ENCODE measurements at regions of chr6 and their contacts with region 1.

Region 1: DNA sequence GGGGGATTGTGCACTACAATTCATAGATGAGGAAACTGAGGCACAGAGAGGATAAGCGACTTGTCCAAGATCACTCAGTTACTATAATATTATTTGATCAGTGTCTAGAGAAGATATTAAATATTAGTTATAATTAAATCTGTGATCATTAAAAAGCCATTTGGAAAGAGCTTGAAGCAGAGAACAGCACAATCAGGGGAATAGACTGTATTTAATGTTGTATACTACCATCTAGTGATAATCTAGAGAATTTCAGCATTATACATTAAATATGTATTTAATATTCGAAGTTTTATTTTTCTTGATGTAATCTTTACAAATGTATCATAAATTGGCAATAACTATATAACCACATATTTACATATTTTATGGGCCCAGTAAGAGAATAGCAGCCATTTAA is 20.1 kb upstream of the MTCL3 start:
- DNase-seq: no peak
- ATAC-seq: peak; percentile 69
- H3K4me3 ChIP-seq: no peak overlapping the region
- H3K27ac ChIP-seq: no peak overlapping the region
- H3K4me1 ChIP-seq: no peaks in the 10 kb centered on the region
- H3K27me3 ChIP-seq: no peaks in the 10 kb centered on the region
- CTCF ChIP-seq: peak in 2 of 3 experiments; percentile 19 to 49; a peak in 2 of 6 replicates
- EP300 ChIP-seq: no peak
- POLR2A ChIP-seq: no peak
- RAD21 ChIP-seq: peak; percentile 53

Region 2: DNA sequence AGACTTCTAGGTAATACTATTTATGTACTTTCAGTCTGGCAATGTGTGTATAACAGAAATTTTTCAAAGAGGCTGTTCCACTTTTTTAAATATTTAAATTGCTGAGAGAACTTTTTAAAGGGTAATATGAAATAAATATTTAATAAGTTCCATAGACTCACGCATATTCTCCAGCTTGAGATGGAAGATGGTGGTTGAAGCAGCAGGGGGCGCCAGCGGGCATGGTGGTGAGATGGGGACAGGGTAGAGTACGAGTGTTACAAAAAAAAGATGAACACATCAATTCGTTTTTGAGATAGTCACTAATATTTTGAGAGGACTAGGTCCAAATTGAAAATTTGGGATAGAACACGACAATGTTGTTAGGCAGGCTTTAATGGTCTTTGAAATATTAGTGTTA is 352.4 kb before region 1 on chr6:
- CTCF ChIA-PET with region 1: interaction called, 38 read pairs
- POLR2A ChIA-PET with region 1: no interaction called
- RAD21 ChIA-PET with region 1: interaction called, 26 read pairs
- SMC1A ChIA-PET with region 1: interaction called, 9 read pairs
- in situ Hi-C with region 1: no loop called
- intact Hi-C with region 1: loop called (anchors 2 kb)
- DNase-seq: no peak
- ATAC-seq: peak; percentile 84
- H3K4me3 ChIP-seq: no peak overlapping the region
- H3K27ac ChIP-seq: no peak overlapping the region
- H3K4me1 ChIP-seq: no peaks in the 10 kb centered on the region
- H3K27me3 ChIP-seq: no peaks in the 10 kb centered on the region
- CTCF ChIP-seq: peak; percentile 58 to 67 (median 67)
- EP300 ChIP-seq: no peak
- POLR2A ChIP-seq: no peak
- RAD21 ChIP-seq: peak; percentile 50

Region 3: DNA sequence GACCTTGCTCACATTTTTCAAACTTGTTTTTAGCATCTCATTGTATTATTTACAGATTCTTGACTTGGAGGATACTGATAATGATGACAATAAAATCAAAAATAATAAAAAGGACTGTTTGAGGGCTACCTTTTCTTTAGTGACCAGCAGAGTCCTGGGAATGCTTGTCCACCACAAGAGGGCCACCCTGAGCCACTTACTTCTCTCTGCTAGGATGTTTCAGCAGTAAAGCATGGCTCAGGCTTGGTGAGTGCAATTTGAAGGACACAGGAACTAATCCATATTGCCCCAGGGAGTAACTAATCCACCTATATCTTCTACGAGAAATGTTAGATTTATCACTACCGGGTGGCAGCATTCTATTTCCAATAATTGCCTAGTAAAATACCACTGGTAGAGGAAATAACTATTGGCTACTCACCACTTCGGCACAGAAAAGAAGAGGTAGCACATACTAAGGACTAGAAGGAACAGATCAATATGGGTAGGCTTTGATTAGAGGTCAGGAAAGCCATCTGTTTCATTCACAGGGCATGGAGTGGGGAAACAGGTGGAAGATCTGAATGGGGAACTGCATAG is 74.3 kb before region 1 on chr6:
- CTCF ChIA-PET with region 1: interaction called, 83 read pairs
- POLR2A ChIA-PET with region 1: no interaction called
- RAD21 ChIA-PET with region 1: interaction called, 56 read pairs
- SMC1A ChIA-PET with region 1: interaction called, 34 read pairs
- in situ Hi-C with region 1: loop called (anchors 5 kb)
- intact Hi-C with region 1: loop called (anchors 1 kb)
- DNase-seq: no peak
- ATAC-seq: peak; percentile 98
- H3K4me3 ChIP-seq: no peak overlapping the region
- H3K27ac ChIP-seq: no peak overlapping the region
- H3K4me1 ChIP-seq: no peaks in the 10 kb centered on the region
- H3K27me3 ChIP-seq: no peaks in the 10 kb centered on the region
- CTCF ChIP-seq: peak; percentile 81 to 88 (median 83)
- EP300 ChIP-seq: no peak
- POLR2A ChIP-seq: no peak
- RAD21 ChIP-seq: peak; percentile 88

Region 4: GRCh38 chr6:127484212-127484858 is 54.9 kb before region 1 on chr6:
- CTCF ChIA-PET with region 1: interaction called, 11 read pairs
- POLR2A ChIA-PET with region 1: no interaction called
- RAD21 ChIA-PET with region 1: interaction called, 9 read pairs
- SMC1A ChIA-PET with region 1: interaction called, 6 read pairs
- in situ Hi-C with region 1: no loop called
- intact Hi-C with region 1: no loop called
- DNase-seq: peak; percentile 39
- ATAC-seq: peak; percentile 98
- H3K4me3 ChIP-seq: peak overlapping the region; percentile 9; the same call in 1 of the 2 replicates
- H3K27ac ChIP-seq: peak overlapping the region; percentile 19; the same call in 1 of the 2 replicates
- H3K4me1 ChIP-seq: peaks cover 9% of the 10 kb centered on the region
- H3K27me3 ChIP-seq: no peaks in the 10 kb centered on the region
- CTCF ChIP-seq: no peak
- EP300 ChIP-seq: no peak; a peak in 1 of 4 replicates
- POLR2A ChIP-seq: no peak
- RAD21 ChIP-seq: no peak

Region 5: DNA sequence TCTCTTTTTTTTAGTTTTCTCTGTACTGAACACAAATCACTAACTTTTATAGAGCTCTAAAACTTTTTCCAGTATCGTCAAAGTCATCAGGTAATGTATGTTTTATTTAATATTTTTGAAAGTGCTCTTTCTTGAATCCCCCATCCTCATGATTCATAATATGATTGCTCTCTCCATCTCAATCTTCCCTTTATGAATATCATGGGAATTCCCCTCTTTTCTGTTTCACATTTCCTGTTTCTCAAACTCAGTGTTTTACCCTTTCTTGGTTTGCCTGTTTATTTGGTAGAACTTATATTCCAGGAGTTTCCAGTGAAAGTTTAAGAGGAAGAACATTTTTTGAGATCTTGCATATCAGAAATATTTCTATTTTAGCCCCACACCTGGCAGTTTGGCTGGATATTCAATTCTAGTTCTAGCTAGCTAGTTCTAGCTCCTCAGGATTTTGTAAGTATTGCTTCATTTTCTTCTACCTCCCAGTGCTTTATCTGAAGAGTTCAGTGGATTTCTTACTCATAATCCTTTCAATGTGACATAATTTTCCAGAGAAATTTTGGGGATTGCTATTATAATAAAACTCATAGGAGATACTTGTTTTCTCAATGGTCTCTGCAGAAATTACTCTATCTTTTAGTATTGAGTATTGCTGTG is 31.6 kb after region 1 on chr6:
- CTCF ChIA-PET with region 1: no interaction called
- POLR2A ChIA-PET with region 1: no interaction called
- RAD21 ChIA-PET with region 1: no interaction called
- SMC1A ChIA-PET with region 1: no interaction called
- in situ Hi-C with region 1: no loop called
- intact Hi-C with region 1: no loop called
- DNase-seq: no peak
- ATAC-seq: peak; percentile 84
- H3K4me3 ChIP-seq: no peak overlapping the region
- H3K27ac ChIP-seq: no peak overlapping the region
- H3K4me1 ChIP-seq: no peaks in the 10 kb centered on the region
- H3K27me3 ChIP-seq: no peaks in the 10 kb centered on the region
- CTCF ChIP-seq: no peak
- EP300 ChIP-seq: peak in 1 of 2 experiments; percentile 37; a peak in 1 of 4 replicates
- POLR2A ChIP-seq: no peak
- RAD21 ChIP-seq: no peak